IMR-90 (cell line): ENCODE measurements at regions of chr11 and their contacts with region 1.

Region 1: DNA sequence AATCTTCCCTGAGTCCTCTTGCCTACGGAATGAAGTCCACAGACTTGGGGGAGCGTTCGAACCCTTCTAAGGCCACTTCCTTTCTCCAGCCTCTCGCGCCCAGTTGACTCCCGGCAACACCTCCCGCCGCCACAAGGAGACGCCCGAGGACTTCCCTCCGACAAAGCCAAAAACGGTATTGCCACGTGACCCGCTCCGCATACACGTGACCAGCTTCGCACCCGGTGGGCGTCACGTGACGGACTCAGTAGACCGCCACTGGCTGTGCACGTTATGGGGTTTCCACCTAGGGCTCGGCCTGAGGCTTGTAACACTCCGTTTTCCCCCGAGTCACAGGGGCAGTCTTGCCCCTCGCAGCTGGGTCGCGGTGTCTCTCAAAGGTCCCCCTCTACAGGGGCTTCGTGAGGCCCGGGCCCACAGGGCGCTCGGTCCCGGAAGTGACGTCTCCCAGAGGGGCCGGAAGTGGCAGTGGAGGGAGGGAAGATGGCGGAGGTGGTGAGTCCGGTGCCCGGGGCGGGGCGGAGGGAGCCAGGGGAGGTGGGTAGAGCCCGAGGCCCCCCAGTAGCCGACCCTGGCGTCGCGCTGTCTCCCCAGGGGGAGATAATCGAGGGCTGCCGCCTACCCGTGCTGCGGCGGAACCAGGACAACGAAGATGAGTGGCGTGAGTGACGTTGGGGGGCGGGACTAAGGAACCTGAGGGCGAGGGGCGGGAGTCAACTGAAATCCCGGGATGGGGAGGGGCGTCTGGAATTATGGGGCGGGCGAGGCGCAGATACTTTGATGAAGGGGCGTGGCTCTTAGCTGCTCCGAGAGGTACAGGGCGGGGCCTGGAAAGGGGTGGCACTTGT is at the start of gene KAT5:
- DNase-seq: peak; percentile 98
- ATAC-seq: peak; percentile 88
- H3K4me3 ChIP-seq: peak within 1 kb of the TSS; percentile 73
- H3K27ac ChIP-seq: peak within 1 kb of the TSS; percentile 99
- H3K4me1 ChIP-seq: no peaks in the 10 kb centered on the region; the same call in 1 of the 2 replicates
- H3K27me3 ChIP-seq: no peaks in the 10 kb centered on the region
- CTCF ChIP-seq: peak; percentile 99
- POLR2A ChIP-seq: peak; percentile 92
- RAD21 ChIP-seq: peak; percentile 97
- total RNA-seq, gene KAT5: 28.6 and 33.3 TPM in 2 replicates

Region 2: DNA sequence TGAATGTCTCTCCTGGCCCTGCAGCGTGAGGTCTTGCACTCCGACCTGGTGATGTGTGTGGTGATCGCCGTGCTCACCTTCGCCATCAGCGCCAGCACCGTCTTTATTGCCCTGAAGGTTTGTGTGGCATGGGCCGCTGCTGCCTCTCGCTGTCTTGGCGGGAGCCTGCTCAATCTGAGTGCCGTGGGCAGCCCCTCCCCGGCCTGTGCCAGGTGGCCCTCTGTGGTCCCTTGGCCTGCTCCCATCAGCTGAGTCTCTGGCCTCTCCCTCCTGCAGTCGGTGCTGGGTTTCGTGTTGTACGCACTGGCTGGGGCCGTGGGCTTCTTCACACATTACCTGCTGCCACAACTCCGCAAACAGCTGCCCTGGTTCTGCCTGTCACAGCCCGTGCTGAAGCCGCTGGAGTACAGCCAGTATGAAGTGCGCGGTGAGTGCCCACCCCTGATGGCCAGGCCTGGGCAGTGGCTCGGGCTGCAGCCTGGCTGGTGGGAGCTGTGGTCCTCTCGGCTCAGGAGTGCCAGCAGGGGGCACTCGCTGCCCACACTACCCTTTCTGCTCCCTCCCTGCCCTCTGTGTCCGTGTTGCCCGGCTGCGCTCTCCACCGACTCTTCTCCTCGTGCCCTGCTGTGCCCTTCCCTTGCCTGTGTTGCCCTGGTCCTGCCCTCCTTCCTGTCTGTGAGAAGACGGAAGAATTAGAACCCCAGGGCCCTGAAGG is 86.2 kb before region 1 on chr11:
- CTCF ChIA-PET with region 1: no interaction called
- POLR2A ChIA-PET with region 1: interaction called, 14 read pairs
- dilution Hi-C with region 1: no loop called
- in situ Hi-C with region 1: no loop called
- intact Hi-C with region 1: no loop called
- DNase-seq: no peak
- ATAC-seq: peak; percentile 79
- H3K4me3 ChIP-seq: no peak overlapping the region
- H3K27ac ChIP-seq: no peak overlapping the region
- H3K4me1 ChIP-seq: no peaks in the 10 kb centered on the region
- H3K27me3 ChIP-seq: no peaks in the 10 kb centered on the region
- CTCF ChIP-seq: peak; percentile 49
- POLR2A ChIP-seq: no peak
- RAD21 ChIP-seq: peak; percentile 57

Region 3: GRCh38 chr11:65779851-65780577 is 68.0 kb after region 1 on chr11:
- CTCF ChIA-PET with region 1: interaction called, 10 read pairs
- POLR2A ChIA-PET with region 1: no interaction called
- dilution Hi-C with region 1: no loop called
- in situ Hi-C with region 1: no loop called
- intact Hi-C with region 1: loop called (anchors 5 kb)
- DNase-seq: peak; percentile 67
- ATAC-seq: peak; percentile 84
- H3K4me3 ChIP-seq: peak overlapping the region; percentile 80
- H3K27ac ChIP-seq: peak overlapping the region; percentile 64
- H3K4me1 ChIP-seq: peaks cover 3% of the 10 kb centered on the region; the same call in 1 of the 2 replicates
- H3K27me3 ChIP-seq: peaks cover 19% of the 10 kb centered on the region
- CTCF ChIP-seq: peak; percentile 99
- POLR2A ChIP-seq: no peak; the same call in 1 of the 2 replicates
- RAD21 ChIP-seq: peak; percentile 69

Region 4: DNA sequence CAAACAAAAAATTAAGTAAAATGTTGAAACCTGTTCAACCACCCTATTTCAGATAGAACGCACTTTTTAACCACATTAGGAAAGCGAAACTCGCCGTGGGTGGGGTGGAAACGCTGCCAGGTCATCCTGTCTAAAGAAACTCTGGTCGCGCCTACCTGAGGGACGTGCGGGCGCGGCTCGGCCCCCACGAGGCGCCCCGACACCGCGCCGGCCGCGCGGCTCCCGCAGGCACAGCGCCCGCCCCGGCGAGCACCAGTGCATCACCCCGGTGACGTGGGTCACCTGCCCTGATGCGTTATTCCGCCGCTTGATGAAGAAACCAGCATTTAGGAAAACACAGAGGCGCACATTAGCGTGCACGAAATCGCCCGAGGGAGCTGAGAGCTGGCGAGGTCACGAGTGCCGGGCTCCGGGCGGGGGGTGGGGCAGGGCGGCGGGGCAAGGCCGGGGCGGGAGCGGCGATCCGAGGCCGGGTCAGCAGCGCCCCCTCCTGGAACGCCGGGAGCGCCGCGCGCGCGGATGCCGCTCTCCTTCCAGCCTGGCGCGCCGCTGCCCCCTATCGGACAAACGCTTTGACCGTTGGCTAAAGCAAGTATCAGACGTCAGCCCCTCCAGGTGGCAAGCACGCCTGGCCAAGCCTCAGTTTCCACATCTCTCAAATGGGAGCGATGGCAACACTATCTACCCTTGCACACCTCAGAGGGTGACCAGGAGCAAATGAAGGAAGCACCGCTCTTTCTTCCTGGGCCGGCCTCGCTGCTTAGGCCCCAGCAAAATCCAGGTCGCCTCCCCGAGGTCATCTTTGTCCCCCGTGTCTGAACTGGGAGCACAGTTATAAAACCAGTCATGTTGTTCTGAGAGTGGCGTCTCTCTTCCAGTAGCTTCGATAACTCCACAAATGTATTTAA is 106.1 kb after region 1 on chr11:
- CTCF ChIA-PET with region 1: interaction called, 23 read pairs
- POLR2A ChIA-PET with region 1: interaction called, 6 read pairs
- dilution Hi-C with region 1: no loop called
- in situ Hi-C with region 1: loop called (anchors 5 kb)
- intact Hi-C with region 1: loop called (anchors 1 kb)
- DNase-seq: peak; percentile 80
- ATAC-seq: peak; percentile 99
- H3K4me3 ChIP-seq: peak overlapping the region; percentile 94
- H3K27ac ChIP-seq: peak overlapping the region; percentile 39; the same call in 1 of the 2 replicates
- H3K4me1 ChIP-seq: no peaks in the 10 kb centered on the region
- H3K27me3 ChIP-seq: peaks cover 6% of the 10 kb centered on the region
- CTCF ChIP-seq: peak; percentile 99
- POLR2A ChIP-seq: no peak
- RAD21 ChIP-seq: peak; percentile 91

Region 5: GRCh38 chr11:65903068-65903481 is 191.1 kb after region 1 on chr11:
- CTCF ChIA-PET with region 1: no interaction called
- POLR2A ChIA-PET with region 1: no interaction called
- dilution Hi-C with region 1: no loop called
- in situ Hi-C with region 1: no loop called
- intact Hi-C with region 1: no loop called
- DNase-seq: peak; percentile 91
- ATAC-seq: peak; percentile 53
- H3K4me3 ChIP-seq: no peak overlapping the region
- H3K27ac ChIP-seq: peak overlapping the region; percentile 97
- H3K4me1 ChIP-seq: peaks cover 20% of the 10 kb centered on the region
- H3K27me3 ChIP-seq: no peaks in the 10 kb centered on the region
- CTCF ChIP-seq: no peak
- POLR2A ChIP-seq: peak; percentile 70; the same call in 1 of the 2 replicates
- RAD21 ChIP-seq: no peak

Region 6: DNA sequence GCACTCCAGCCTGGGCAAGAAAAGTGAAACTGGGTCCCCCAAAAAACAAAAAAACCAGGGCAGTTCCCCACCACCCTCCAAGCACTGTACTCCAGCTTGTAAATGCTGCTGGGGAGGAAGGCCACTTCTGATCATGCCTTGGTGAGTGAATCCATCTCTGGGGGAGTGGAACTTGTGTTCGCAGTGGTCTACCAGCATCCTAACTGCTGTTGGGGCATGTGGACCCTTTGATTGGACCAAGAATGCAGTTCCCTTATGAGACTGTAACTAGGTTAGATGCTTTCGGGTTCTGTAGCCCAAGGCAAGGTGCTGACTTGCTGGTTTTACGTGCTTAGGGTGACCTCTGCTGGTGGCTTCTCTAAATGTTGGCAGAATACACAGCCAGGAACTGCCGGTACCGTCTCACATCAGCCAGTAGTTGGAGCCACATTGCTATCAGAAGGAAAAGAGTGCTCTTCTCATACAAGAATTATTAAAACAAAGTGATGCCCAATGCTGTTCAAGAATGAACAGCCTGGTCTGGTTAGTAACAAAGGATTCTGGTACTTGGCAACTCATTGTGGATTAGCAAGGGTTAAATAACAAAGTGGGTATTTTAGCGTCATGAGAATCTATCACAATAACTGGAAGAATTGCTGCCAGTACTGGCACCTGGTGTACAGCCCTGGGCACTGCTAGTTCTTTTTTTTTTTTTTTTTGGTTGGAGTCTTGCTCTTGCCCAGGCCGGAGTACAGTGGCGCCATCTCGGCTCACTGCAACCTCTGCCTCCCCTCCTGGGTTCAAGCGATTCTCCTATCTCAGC is 277.0 kb after region 1 on chr11:
- CTCF ChIA-PET with region 1: interaction called, 5 read pairs
- POLR2A ChIA-PET with region 1: no interaction called
- dilution Hi-C with region 1: no loop called
- in situ Hi-C with region 1: loop called (anchors 10 kb)
- intact Hi-C with region 1: loop called (anchors 1 kb)
- DNase-seq: peak; percentile 96
- ATAC-seq: peak; percentile 99
- H3K4me3 ChIP-seq: no peak overlapping the region
- H3K27ac ChIP-seq: no peak overlapping the region
- H3K4me1 ChIP-seq: no peaks in the 10 kb centered on the region
- H3K27me3 ChIP-seq: no peaks in the 10 kb centered on the region
- CTCF ChIP-seq: peak; percentile 99
- POLR2A ChIP-seq: 0 out of 2 replicates have a peak, but pooled peaks have one; percentile 52
- RAD21 ChIP-seq: peak; percentile 96